ENCODE measurements at regions of chr2 and their contacts with region 1.

Region 1: GRCh38 chr2:169109502-169110409 is 40.4 kb downstream of the DHRS9 start:
- DNase-seq: peak; percentile 88
- H3K4me3 Mint-ChIP-seq: no peak overlapping the region
- H3K27ac Mint-ChIP-seq: no peak overlapping the region
- H3K4me1 Mint-ChIP-seq: no peaks in the 10 kb centered on the region
- H3K27me3 Mint-ChIP-seq: no peaks in the 10 kb centered on the region
- CTCF ChIP-seq: peak; percentile 87

Region 2: DNA sequence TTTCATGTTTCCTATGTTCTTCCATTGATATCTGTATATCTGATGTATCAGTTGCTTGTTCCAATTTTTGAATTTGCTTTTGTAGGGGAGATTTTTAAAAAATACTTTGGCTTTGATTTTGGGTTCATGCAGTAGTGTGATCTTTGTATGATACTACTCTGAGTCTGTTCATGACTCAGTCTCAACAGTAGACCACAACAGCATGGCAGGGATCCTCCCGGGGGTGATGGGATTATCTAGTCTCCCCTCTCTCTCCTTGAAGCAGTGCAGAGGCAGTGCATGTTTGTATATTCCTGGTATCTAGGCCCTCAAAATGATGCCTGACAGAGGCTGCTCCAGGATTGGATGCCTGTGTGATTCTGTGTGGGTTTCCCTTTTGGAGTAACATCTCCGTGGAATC is 153.4 kb before region 1 on chr2:
- CTCF ChIA-PET with region 1: interaction called, 35 read pairs
- POLR2A ChIA-PET with region 1: no interaction called
- intact Hi-C with region 1: loop called (anchors 1 kb)
- DNase-seq: no peak
- H3K4me3 Mint-ChIP-seq: no peak overlapping the region
- H3K27ac Mint-ChIP-seq: no peak overlapping the region
- H3K4me1 Mint-ChIP-seq: no peaks in the 10 kb centered on the region
- H3K27me3 Mint-ChIP-seq: no peaks in the 10 kb centered on the region
- CTCF ChIP-seq: no peak

Region 3: GRCh38 chr2:168971261-168971660 is 138.5 kb before region 1 on chr2:
- CTCF ChIA-PET with region 1: interaction called, 14 read pairs
- POLR2A ChIA-PET with region 1: no interaction called
- intact Hi-C with region 1: no loop called
- DNase-seq: no peak
- H3K4me3 Mint-ChIP-seq: no peak overlapping the region
- H3K27ac Mint-ChIP-seq: no peak overlapping the region
- H3K4me1 Mint-ChIP-seq: no peaks in the 10 kb centered on the region
- H3K27me3 Mint-ChIP-seq: no peaks in the 10 kb centered on the region
- CTCF ChIP-seq: no peak

Region 4: GRCh38 chr2:169131587-169132512 is 22.1 kb after region 1 on chr2:
- CTCF ChIA-PET with region 1: interaction called, 143 read pairs
- POLR2A ChIA-PET with region 1: interaction called, 7 read pairs
- intact Hi-C with region 1: loop called (anchors 1 kb)
- DNase-seq: peak; percentile 78
- H3K4me3 Mint-ChIP-seq: no peak overlapping the region
- H3K27ac Mint-ChIP-seq: no peak overlapping the region
- H3K4me1 Mint-ChIP-seq: no peaks in the 10 kb centered on the region
- H3K27me3 Mint-ChIP-seq: no peaks in the 10 kb centered on the region
- CTCF ChIP-seq: peak; percentile 73

Region 5: DNA sequence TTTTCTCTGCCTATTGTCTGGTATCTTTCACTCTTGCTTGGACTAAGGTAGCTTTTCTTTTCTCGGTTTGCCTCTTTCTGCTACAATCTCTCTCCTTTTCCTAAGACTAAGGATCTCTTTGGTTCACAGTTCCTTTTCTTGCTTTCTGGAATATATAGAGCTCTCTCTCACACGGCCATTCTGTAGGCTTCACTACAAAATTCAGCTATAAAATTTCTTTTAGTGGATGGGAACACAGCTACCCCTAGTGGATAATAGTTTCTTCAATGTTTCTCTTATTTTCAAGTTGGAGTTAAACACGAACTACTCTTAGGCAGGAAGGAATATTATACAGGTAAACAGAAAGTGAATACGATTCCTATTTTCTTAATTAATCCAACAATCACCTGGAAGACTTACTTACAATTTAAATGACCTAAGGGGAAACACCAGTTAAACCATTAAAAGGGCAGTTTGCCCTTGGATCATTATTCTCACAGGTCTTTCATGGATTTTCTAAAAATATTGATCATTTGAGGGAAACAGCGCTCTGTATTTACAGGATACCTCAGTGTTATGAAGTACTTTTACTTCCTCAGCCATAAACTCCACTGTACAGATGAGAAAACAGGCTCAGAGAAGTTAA is 112.1 kb after region 1 on chr2:
- CTCF ChIA-PET with region 1: interaction called, 75 read pairs
- POLR2A ChIA-PET with region 1: interaction called, 3 read pairs
- intact Hi-C with region 1: loop called (anchors 2 kb)
- DNase-seq: peak; percentile 42
- H3K4me3 Mint-ChIP-seq: no peak overlapping the region
- H3K27ac Mint-ChIP-seq: no peak overlapping the region
- H3K4me1 Mint-ChIP-seq: no peaks in the 10 kb centered on the region
- H3K27me3 Mint-ChIP-seq: no peaks in the 10 kb centered on the region
- CTCF ChIP-seq: peak; percentile 41

Region 6: GRCh38 chr2:169397697-169398096 is 287.9 kb after region 1 on chr2:
- CTCF ChIA-PET with region 1: interaction called, 52 read pairs
- POLR2A ChIA-PET with region 1: no interaction called
- intact Hi-C with region 1: loop called (anchors 1 kb)
- DNase-seq: peak; percentile 27
- H3K4me3 Mint-ChIP-seq: no peak overlapping the region
- H3K27ac Mint-ChIP-seq: no peak overlapping the region
- H3K4me1 Mint-ChIP-seq: peaks cover 6% of the 10 kb centered on the region
- H3K27me3 Mint-ChIP-seq: peaks cover 38% of the 10 kb centered on the region
- CTCF ChIP-seq: peak; percentile 28

Measured in MCF 10A (cell line).